ENCODE measurements at regions of chr1 and their contacts with region 1.

Region 1: DNA sequence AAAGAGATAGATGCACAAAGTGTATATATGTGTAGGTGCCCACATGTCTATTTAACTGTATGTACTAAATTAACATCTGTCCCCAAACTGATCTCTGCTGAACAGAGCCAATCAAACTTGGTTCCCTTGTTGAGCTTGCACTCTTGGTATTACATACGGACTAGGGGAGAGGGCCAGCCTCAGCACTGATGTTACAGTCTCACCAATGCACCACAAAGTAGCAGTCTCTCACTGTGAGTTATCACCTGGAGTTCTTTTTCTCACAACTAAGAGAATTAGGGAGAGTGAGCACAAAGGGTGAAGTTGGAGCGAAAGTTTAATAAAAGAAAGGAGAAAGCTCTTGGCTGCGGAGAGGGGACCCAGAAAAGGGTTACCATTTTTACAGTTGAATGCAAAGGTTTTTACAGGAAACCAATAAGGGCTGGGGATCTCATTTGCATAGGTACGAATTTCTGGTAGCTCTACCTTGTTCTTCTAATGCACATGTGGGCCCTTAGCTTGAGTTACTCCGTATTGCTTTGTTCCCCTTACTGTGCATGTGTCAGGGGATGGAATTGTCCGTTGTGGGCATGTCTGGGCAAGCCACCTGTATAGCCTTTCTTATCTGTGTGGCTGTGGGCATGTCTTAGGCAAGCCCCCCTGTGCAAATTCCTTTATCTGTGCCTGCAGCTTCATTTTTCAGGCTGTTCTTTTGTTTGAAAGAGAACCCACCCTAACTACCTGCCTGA is 13.3 kb upstream of the CHI3L2 start:
- DNase-seq: no peak
- H3K4me3 Mint-ChIP-seq: peak overlapping the region; percentile 64
- H3K27ac Mint-ChIP-seq: peak overlapping the region; percentile 94
- H3K4me1 Mint-ChIP-seq: peaks cover 78% of the 10 kb centered on the region
- H3K27me3 Mint-ChIP-seq: no peaks in the 10 kb centered on the region

Region 2: GRCh38 chr1:110668549-110668948 is 545.7 kb before region 1 on chr1:
- intact Hi-C with region 1: loop called (anchors 2 kb)
- DNase-seq: no peak
- H3K4me3 Mint-ChIP-seq: peak overlapping the region; percentile 77
- H3K27ac Mint-ChIP-seq: peak overlapping the region; percentile 89
- H3K4me1 Mint-ChIP-seq: peaks cover 34% of the 10 kb centered on the region
- H3K27me3 Mint-ChIP-seq: no peaks in the 10 kb centered on the region

Region 3: DNA sequence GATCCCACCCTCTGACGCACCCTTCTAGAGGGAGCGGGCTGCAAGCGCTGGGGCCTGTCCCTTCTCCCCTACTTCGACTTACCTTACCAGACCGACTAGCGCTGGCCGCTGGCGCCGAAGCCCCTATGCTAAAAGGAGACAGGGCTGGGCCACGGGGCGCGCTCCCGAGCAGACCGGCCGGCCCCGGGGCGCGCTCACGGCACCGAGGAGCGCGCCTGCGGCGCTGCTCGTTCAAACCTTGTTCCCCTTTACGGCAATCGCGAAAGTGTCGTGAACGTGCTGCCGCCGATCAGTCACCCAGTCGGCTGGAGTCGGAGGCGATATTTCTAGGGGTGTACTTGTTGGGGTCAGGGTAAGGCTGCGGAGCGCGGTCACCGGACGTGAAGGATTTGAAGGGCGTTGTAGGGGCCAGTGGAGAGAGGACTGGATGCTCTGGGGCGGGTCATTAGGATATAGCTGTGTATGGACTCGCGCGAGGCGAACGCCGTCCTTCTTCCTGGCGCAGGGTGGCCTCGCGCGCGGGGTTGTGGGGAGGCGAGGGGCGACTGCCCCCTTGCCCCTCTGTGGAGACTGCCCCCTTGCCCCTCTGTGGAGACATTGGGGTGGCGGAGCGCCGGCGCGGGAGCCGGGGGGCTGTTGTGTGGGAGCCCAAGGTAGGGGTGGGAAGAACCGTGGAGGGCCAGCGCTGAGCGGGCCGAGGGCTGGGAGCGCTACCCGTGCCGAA is 74.1 kb before region 1 on chr1 and contains the starts of genes CEPT1 and DRAM2:
- intact Hi-C with region 1: loop called (anchors 2 kb)
- DNase-seq: peak; percentile 89
- H3K4me3 Mint-ChIP-seq: peak within 1 kb of the TSS; percentile 100
- H3K27ac Mint-ChIP-seq: peak within 1 kb of the TSS; percentile 100
- H3K4me1 Mint-ChIP-seq: peaks cover 40% of the 10 kb centered on the region
- H3K27me3 Mint-ChIP-seq: no peaks in the 10 kb centered on the region
- total RNA-seq, gene CEPT1: 32.5 and 37.3 TPM in 2 replicates
- total RNA-seq, gene DRAM2: 24.0 and 26.6 TPM in 2 replicates

Region 4: GRCh38 chr1:111197598-111198284 is 16.5 kb before region 1 on chr1:
- intact Hi-C with region 1: loop called (anchors 1 kb)
- DNase-seq: no peak
- H3K4me3 Mint-ChIP-seq: peak overlapping the region; percentile 100
- H3K27ac Mint-ChIP-seq: peak overlapping the region; percentile 99
- H3K4me1 Mint-ChIP-seq: peaks cover 81% of the 10 kb centered on the region
- H3K27me3 Mint-ChIP-seq: no peaks in the 10 kb centered on the region

Region 5: DNA sequence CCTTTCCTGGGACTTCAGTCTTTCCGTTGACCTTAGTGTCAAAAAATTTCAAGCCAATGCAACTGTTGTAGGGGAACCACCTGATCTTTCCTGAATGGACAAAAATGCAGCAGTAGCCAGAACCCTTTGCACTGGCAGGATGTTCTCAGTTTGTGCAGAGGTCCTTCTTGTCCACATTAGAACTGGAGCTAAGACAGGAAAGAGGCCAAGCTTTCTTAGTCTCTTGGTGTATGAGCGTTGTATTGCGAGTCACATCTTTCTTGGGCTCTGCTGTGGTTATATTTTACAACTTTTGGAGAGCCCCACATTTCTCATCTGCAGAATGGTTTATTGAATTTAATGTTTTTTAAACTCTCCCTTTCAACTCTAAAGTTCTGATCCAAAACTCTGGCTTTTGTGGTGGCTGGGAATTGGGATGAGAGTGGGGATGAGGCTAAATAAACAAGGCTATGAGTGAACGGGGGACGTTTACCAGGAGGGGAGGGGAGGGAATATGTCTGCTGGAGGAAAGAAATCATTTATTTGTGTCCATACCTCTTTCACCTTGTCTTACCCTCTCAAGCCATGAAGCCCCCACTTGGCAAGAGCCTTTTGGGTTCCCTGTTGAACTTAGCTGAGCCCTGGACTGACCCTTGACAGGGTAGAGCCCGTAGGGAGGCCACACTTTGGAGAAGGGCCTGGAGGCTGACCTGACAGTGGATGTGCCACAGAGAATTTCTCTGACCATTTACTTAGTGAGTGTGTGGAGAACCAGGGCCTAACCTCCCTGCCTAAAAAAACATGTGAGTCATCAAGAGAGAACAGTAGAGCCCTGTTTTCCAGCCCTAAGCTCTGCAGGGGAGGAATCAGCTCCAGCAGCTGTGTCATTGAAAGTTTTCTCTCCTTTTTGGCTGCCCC is 13.9 kb after region 1 on chr1:
- intact Hi-C with region 1: loop called (anchors 2 kb)
- DNase-seq: no peak
- H3K4me3 Mint-ChIP-seq: peak overlapping the region; percentile 46
- H3K27ac Mint-ChIP-seq: peak overlapping the region; percentile 71
- H3K4me1 Mint-ChIP-seq: peaks cover 85% of the 10 kb centered on the region
- H3K27me3 Mint-ChIP-seq: no peaks in the 10 kb centered on the region

Region 6: GRCh38 chr1:111448918-111449702 is 234.9 kb after region 1 on chr1 and contains the starts of genes ATP5PB and WDR77:
- intact Hi-C with region 1: loop called (anchors 1 kb)
- DNase-seq: peak; percentile 91
- H3K4me3 Mint-ChIP-seq: peak within 1 kb of the TSS; percentile 100
- H3K27ac Mint-ChIP-seq: peak within 1 kb of the TSS; percentile 96
- H3K4me1 Mint-ChIP-seq: peaks cover 74% of the 10 kb centered on the region
- H3K27me3 Mint-ChIP-seq: no peaks in the 10 kb centered on the region
- total RNA-seq, gene ATP5PB: 280 and 282 TPM in 2 replicates
- total RNA-seq, gene WDR77: 61.3 and 62.5 TPM in 2 replicates

Measured in activated T-helper 1 cell treated with anti-CD3 and anti-CD28 coated beads, Interleukin-12 subunit alpha, Interleukin-12 subunit beta, Interleukin-2, Interleukin-4 antibody, amounts not matched to agents 30 ng/mL and 10 ng/mL and 1 ng/mL, durations not matched to agents 14 hours and 24 hours and 36 hours (primary cell).